MCF 10A (cell line): ENCODE measurements at regions of chr17 and their contacts with region 1.

Region 1: GRCh38 chr17:64025732-64026294 is 5.4 kb upstream of the ICAM2 start:
- DNase-seq: peak; percentile 69
- H3K4me3 Mint-ChIP-seq: peak overlapping the region; percentile 21
- H3K27ac Mint-ChIP-seq: no peak overlapping the region
- H3K4me1 Mint-ChIP-seq: peaks cover 7% of the 10 kb centered on the region
- H3K27me3 Mint-ChIP-seq: no peaks in the 10 kb centered on the region
- CTCF ChIP-seq: peak; percentile 84

Region 2: GRCh38 chr17:63503334-63503692 is 522.5 kb before region 1 on chr17:
- CTCF ChIA-PET with region 1: no interaction called
- POLR2A ChIA-PET with region 1: no interaction called
- intact Hi-C with region 1: no loop called
- DNase-seq: no peak
- H3K4me3 Mint-ChIP-seq: no peak overlapping the region
- H3K27ac Mint-ChIP-seq: no peak overlapping the region
- H3K4me1 Mint-ChIP-seq: no peaks in the 10 kb centered on the region
- H3K27me3 Mint-ChIP-seq: peaks cover 60% of the 10 kb centered on the region
- CTCF ChIP-seq: no peak

Region 3: GRCh38 chr17:63919311-63919723 is 106.5 kb before region 1 on chr17:
- CTCF ChIA-PET with region 1: interaction called, 40 read pairs
- POLR2A ChIA-PET with region 1: interaction called, 4 read pairs
- intact Hi-C with region 1: loop called (anchors 1 kb)
- DNase-seq: peak; percentile 64
- H3K4me3 Mint-ChIP-seq: no peak overlapping the region
- H3K27ac Mint-ChIP-seq: no peak overlapping the region
- H3K4me1 Mint-ChIP-seq: peaks cover 5% of the 10 kb centered on the region
- H3K27me3 Mint-ChIP-seq: peaks cover 13% of the 10 kb centered on the region
- CTCF ChIP-seq: peak; percentile 90

Region 4: DNA sequence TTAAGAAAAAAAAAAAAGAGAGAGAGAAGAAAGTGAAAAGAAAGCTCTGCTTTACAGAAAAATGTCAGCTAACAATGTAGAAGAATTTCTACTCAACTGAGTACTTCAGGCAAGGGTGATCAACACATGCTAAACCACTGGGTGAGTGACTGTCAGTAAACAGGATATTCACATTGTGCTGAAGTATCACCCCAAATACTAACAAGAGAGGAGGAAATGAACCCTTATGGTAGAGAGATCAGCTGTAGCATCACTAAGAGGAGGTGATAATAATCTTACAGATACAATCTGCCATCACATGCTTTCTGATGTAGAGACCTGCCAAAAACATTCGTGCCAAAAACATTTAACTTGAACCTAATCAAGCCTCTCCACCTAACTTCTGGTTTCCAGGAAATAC is 25.3 kb after region 1 on chr17:
- CTCF ChIA-PET with region 1: interaction called, 18 read pairs
- POLR2A ChIA-PET with region 1: interaction called, 3 read pairs
- intact Hi-C with region 1: no loop called
- DNase-seq: no peak
- H3K4me3 Mint-ChIP-seq: no peak overlapping the region
- H3K27ac Mint-ChIP-seq: no peak overlapping the region
- H3K4me1 Mint-ChIP-seq: no peaks in the 10 kb centered on the region
- H3K27me3 Mint-ChIP-seq: no peaks in the 10 kb centered on the region
- CTCF ChIP-seq: no peak

Region 5: DNA sequence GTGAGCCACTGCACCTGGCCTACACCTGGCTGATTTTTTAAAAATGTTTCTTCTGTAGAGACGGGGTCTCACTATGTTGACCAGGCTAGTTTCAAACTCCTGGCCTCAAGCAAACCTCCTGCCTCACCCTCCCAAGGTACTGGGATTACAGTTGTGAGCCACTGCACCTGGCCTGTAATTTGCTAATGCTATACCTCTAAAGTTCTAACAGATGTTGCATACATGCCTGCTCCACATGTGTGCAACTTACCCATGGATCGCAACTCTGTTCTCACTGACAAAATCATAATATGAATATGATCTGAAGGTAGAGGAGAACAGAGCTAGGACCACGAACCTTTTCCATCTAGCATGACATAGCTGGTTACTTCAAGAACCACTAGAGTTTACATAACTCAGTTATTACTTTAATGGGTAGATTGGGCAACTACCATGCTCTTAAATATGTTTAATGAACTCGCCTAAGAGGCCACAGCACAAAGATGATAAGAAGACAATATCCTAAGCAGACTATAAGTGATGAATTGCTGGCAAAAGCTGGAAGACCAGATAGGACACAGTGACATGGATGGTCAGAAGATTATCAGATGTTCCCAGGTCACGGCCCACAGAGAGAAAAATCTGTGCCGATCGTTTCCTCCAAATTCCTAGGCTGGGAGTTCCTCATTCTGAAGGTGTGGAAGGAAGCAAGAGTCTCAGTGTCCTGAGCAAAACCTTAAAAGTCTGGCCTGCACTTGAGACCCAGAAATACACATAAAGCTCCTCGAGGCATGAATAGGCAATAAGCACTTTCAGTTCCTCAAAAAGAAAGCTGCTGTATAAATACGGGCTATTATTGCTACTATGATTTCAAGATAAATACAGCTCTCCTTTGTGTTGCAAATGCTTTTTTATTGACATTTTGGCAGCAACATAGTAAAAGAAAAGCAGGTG is 48.2 kb after region 1 on chr17:
- CTCF ChIA-PET with region 1: interaction called, 12 read pairs
- POLR2A ChIA-PET with region 1: interaction called, 4 read pairs
- intact Hi-C with region 1: no loop called
- DNase-seq: no peak
- H3K4me3 Mint-ChIP-seq: no peak overlapping the region
- H3K27ac Mint-ChIP-seq: peak overlapping the region; percentile 79
- H3K4me1 Mint-ChIP-seq: peaks cover 20% of the 10 kb centered on the region
- H3K27me3 Mint-ChIP-seq: no peaks in the 10 kb centered on the region
- CTCF ChIP-seq: no peak

Region 6: GRCh38 chr17:64281962-64282727 is 256.3 kb after region 1 on chr17:
- CTCF ChIA-PET with region 1: interaction called, 9 read pairs
- POLR2A ChIA-PET with region 1: interaction called, 3 read pairs
- intact Hi-C with region 1: loop called (anchors 1 kb)
- DNase-seq: peak; percentile 72
- H3K4me3 Mint-ChIP-seq: no peak overlapping the region
- H3K27ac Mint-ChIP-seq: no peak overlapping the region
- H3K4me1 Mint-ChIP-seq: peaks cover 9% of the 10 kb centered on the region
- H3K27me3 Mint-ChIP-seq: no peaks in the 10 kb centered on the region
- CTCF ChIP-seq: peak; percentile 74

Region 7: DNA sequence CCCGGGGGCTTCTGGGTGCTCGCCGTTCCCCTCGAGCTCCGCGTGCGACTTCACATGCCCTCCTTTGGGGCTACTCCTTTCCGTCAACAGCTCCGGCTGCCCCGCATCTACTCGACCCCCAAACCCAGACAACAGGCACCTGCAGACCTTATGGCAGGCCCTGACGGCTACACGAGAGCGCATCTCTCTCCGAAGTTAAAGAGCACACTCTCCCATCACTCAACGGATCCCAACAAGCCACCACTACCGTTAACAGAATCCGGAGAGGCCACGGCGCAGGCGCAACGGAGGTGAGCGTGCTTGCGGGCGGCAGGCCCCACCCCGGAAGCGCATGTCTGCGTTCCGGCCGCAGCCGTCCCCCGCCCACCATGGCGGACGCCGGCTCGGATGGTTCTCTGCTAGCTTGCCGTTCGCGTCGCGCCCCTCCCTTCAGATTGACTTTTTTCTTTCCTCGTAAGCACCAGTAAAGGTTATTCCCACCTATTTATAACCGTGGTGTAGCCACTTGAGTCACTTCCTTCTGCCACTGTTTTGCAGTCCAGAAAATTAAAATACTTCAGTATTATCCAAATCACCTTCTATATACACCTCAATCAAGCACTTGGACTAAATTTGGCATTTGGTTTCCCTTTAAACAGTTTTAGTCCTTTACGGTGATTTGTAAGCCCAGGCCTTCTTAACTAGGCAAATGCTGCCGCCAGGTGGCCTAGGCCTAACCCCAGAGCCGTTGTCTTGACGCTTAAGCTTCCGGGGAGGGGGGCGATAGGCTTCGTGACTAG is 471.2 kb after region 1 on chr17 and contains the start of gene POLG2:
- CTCF ChIA-PET with region 1: no interaction called
- POLR2A ChIA-PET with region 1: no interaction called
- intact Hi-C with region 1: no loop called
- DNase-seq: peak; percentile 94
- H3K4me3 Mint-ChIP-seq: peak within 1 kb of the TSS; percentile 100
- H3K27ac Mint-ChIP-seq: peak within 1 kb of the TSS; percentile 98
- H3K4me1 Mint-ChIP-seq: peaks cover 39% of the 10 kb centered on the region
- H3K27me3 Mint-ChIP-seq: no peaks in the 10 kb centered on the region
- CTCF ChIP-seq: peak; percentile 38
- total RNA-seq, gene POLG2: 27.5 and 29.4 TPM in 2 replicates

Region 8: DNA sequence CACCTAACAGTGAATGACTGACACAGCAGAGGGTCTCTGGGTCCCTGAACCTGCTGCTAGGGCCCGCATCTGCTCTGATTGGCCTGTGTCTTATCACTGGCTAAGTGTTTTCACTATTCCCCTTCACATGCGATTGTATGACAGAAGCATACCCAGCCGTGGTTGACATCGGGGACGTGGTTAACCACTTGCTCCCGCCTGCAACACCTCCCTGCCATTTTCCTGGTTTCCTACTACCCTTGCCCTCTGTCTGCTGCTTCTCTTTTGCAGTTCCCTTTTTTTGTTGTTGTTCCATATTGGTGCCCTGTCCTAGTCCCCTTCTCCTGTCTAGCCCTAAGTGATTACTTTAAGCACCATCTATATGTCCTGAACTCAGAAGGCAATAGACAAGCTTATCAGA is 1288.4 kb after region 1 on chr17:
- CTCF ChIA-PET with region 1: no interaction called
- POLR2A ChIA-PET with region 1: no interaction called
- intact Hi-C with region 1: no loop called
- DNase-seq: no peak
- H3K4me3 Mint-ChIP-seq: no peak overlapping the region
- H3K27ac Mint-ChIP-seq: no peak overlapping the region
- H3K4me1 Mint-ChIP-seq: no peaks in the 10 kb centered on the region
- H3K27me3 Mint-ChIP-seq: peaks cover 69% of the 10 kb centered on the region
- CTCF ChIP-seq: no peak